ENCODE measurements at regions of chr2 and their contacts with region 1.

Region 1: GRCh38 chr2:154350911-154351310 is 347.6 kb upstream of the KCNJ3 start:
- DNase-seq: no peak
- CTCF ChIP-seq: no peak

Region 2: GRCh38 chr2:154324601-154325000 is 26.3 kb before region 1 on chr2:
- CTCF ChIA-PET with region 1: no interaction called
- POLR2A ChIA-PET with region 1: no interaction called
- DNase-seq: no peak
- CTCF ChIP-seq: no peak

Region 3: DNA sequence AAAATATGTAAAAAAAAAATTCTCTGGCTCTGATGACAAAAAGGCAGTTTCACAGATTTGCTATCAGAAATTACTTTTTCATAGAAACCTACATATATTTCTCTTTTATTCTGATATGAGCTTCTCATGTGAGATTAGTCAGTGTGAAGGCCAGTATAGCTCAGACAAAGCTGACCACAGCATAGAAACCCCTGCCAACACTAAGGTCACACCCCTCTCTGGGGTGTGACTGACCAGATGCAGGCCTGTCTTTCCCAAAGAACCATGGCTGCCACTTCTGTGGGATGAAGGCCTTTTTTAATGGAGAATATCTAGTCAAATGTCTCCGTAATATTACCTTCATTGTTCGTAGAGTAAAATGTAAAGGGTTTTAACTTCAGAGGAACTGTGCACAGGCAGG is 17.2 kb after region 1 on chr2:
- CTCF ChIA-PET with region 1: interaction called, 10 read pairs
- POLR2A ChIA-PET with region 1: no interaction called
- DNase-seq: no peak
- CTCF ChIP-seq: no peak

Region 4: GRCh38 chr2:154912215-154912614 is 561.3 kb after region 1 on chr2:
- CTCF ChIA-PET with region 1: no interaction called
- POLR2A ChIA-PET with region 1: no interaction called
- DNase-seq: no peak
- CTCF ChIP-seq: no peak